PC-3 (cell line): ENCODE measurements at regions of chr19 and their contacts with region 1.

Region 1: DNA sequence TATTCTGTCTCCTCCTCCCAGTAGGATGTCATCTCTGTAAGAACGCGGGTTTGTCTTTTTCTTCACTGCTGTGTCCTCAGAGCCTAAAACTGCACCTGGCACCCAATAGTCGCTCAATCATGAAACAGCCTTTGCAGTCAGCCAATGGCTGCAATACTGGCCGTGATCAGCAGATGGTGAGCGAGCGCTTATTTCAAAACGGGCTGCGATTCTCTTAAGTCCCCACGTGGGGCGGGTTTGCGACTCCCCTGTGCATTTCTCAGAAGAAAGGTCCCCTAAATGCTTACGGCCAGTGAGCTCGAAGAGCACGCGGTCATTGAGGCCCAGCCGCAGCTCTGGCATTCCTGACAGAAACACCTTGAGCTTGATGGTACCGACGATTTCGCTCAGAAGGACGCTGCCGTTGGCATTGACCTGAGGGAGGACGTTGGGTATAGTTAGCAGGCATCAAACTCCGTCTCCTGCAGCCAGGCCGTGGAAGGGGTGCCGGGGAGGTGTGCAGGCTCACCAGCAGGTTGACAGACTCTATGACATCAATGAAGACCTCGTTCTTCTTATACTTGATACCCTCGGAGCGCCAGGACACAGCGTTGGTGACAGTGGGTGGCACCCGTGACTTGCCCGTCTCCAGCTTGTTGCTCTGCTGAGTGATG is 6.0 kb downstream of the AP1M2 start:
- DNase-seq: peak; percentile 98
- ATAC-seq: peak; percentile 91
- H3K4me3 ChIP-seq: no peak overlapping the region
- H3K27ac ChIP-seq: no peak overlapping the region
- H3K4me1 ChIP-seq: no peaks in the 10 kb centered on the region
- H3K27me3 ChIP-seq: no peaks in the 10 kb centered on the region
- CTCF ChIP-seq: peak; percentile 99

Region 2: GRCh38 chr19:10625003-10625776 is 44.1 kb after region 1 on chr19 and contains the start of gene SLC44A2:
- CTCF ChIA-PET with region 1: no interaction called
- POLR2A ChIA-PET with region 1: no interaction called
- intact Hi-C with region 1: loop called (anchors 1 kb)
- DNase-seq: peak; percentile 95
- ATAC-seq: peak; percentile 98
- H3K4me3 ChIP-seq: peak within 1 kb of the TSS; percentile 84
- H3K27ac ChIP-seq: peak within 1 kb of the TSS; percentile 38
- H3K4me1 ChIP-seq: peaks cover 21% of the 10 kb centered on the region
- H3K27me3 ChIP-seq: no peaks in the 10 kb centered on the region
- CTCF ChIP-seq: no peak
- total RNA-seq, gene SLC44A2: 63.9 and 87.3 TPM in 2 replicates

Region 3: GRCh38 chr19:10655676-10656312 is 74.7 kb after region 1 on chr19:
- CTCF ChIA-PET with region 1: no interaction called
- POLR2A ChIA-PET with region 1: no interaction called
- intact Hi-C with region 1: no loop called
- DNase-seq: peak; percentile 39
- ATAC-seq: no peak
- H3K4me3 ChIP-seq: peak overlapping the region; percentile 94
- H3K27ac ChIP-seq: peak overlapping the region; percentile 68
- H3K4me1 ChIP-seq: peaks cover 27% of the 10 kb centered on the region
- H3K27me3 ChIP-seq: no peaks in the 10 kb centered on the region
- CTCF ChIP-seq: peak; percentile 26; the same call in 1 of the 2 replicates